Activated T-helper 2 cell treated with anti-CD3 and anti-CD28 coated beads, Interferon-gamma antibody, Interleukin-2, Interleukin-4, amounts not matched to agents 10 μg/mL and 5 μg/mL and 100 μg/mL, durations not matched to agents 14 hours and 24 hours and 36 hours (primary cell): ENCODE measurements at regions of chr16 and their contacts with region 1.

Region 1: DNA sequence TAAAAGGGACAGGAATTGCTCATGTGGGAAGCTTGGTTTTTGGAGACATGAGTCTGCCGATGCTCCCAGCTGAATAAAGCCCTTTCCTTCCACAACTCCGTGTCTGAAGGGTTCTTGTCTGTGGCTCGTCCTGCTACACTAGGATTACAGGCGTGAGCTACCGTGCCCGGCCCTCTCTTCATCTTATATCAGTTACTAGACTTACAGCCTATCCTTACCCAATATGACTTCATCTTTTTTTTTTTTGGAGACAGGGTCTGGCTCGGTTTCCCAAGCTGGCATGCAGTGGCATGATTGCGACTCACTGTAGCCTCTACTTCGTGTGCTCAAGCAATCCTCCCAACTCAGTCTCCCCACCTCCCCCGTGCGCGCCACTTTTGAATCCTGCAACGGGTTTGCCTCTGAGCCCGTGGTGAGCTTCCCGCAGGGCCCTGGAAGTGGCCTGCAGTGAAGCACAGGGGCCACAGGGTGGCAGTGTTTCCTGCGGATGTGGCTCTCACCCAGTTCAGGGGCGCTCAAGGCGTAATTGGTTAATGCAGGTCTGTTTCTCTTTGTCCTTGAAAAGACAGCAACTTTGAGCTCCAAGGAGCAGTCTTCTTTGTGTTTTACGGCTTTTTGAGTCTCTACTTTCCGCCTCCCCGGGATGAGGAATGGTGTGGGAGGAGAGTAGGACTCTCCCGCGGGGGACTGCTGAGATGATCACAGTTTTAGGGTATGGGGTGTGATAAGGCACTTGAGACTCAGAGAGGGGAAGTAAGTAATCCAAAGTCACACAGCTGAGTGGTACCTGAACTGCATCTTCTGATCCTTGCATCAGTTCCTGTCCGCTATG is 22.7 kb upstream of the GPRC5B start:
- DNase-seq: peak; percentile 61
- H3K4me3 Mint-ChIP-seq: no peak overlapping the region
- H3K27ac Mint-ChIP-seq: no peak overlapping the region
- H3K4me1 Mint-ChIP-seq: peaks cover 7% of the 10 kb centered on the region
- H3K27me3 Mint-ChIP-seq: peaks cover 5% of the 10 kb centered on the region

Region 2: DNA sequence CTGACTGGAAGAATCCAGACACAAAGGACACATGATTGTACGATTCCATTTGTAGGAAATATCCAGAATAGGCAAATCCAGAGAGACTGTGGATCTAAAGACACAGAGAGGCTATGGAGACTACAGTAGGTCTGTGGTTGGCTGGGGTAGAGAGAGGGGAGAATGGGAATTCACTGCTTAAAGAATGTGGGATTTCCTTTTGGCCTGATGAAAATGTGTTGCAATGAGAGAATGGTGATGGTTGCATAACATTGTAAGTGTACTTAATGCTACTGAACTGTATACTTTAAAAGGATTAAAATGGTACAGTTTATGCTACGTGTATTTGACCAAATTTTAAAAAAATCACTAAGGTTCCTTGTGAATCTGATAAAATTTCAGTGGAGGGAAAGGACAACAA is 84.8 kb before region 1 on chr16:
- intact Hi-C with region 1: no loop called
- DNase-seq: no peak
- H3K4me3 Mint-ChIP-seq: no peak overlapping the region
- H3K27ac Mint-ChIP-seq: no peak overlapping the region
- H3K4me1 Mint-ChIP-seq: no peaks in the 10 kb centered on the region
- H3K27me3 Mint-ChIP-seq: no peaks in the 10 kb centered on the region

Region 3: GRCh38 chr16:20300312-20301097 is 393.1 kb after region 1 on chr16:
- intact Hi-C with region 1: loop called (anchors 1 kb)
- DNase-seq: peak; percentile 25
- H3K4me3 Mint-ChIP-seq: no peak overlapping the region
- H3K27ac Mint-ChIP-seq: no peak overlapping the region
- H3K4me1 Mint-ChIP-seq: no peaks in the 10 kb centered on the region
- H3K27me3 Mint-ChIP-seq: no peaks in the 10 kb centered on the region

Region 4: DNA sequence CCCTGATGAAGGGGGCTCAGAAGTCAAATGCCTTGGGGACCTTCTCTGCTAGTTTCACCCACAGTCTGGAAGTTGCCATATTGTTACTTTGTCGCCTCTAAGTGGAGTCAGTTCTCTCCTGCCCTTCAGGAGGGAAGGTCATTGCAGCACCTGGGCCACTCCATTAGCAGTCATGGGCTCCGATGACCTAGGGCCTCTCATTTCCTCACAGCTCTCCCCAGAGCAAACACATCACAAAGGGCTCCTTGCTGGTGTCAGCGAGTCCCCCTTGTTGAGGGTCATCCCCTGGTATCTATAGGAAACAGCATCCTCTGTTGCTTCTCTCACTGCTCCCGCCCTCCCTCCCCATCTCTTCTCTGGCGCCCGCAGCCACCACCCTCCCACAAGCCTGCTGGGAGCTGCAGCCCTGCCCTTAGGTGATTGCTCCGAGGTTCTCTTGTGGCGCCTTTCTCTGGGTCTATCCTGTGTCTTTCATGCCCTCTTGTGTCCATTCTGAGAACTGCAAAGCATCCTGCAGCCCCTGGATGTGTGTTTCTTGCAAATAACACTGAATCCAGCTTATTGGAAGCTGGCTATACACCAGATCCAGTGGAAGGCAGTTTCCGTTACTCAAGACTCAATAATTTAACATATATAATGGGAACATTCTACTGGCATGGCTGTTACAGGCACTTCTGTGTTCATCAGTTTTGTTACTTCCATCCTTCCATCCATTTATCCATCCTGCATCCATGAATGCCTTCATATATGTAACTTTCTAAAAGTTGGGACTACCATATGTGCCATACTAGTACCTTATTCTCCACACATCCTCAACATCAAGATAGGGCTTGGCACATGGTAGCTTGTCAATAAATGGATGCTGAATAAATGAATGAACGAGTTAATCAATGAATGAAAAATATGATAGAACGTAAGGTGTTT is 476.0 kb after region 1 on chr16:
- intact Hi-C with region 1: loop called (anchors 1 kb)
- DNase-seq: peak; percentile 17
- H3K4me3 Mint-ChIP-seq: no peak overlapping the region
- H3K27ac Mint-ChIP-seq: no peak overlapping the region
- H3K4me1 Mint-ChIP-seq: no peaks in the 10 kb centered on the region
- H3K27me3 Mint-ChIP-seq: peaks cover 4% of the 10 kb centered on the region